ENCODE measurements at regions of chr7 and their contacts with region 1.

Region 1: DNA sequence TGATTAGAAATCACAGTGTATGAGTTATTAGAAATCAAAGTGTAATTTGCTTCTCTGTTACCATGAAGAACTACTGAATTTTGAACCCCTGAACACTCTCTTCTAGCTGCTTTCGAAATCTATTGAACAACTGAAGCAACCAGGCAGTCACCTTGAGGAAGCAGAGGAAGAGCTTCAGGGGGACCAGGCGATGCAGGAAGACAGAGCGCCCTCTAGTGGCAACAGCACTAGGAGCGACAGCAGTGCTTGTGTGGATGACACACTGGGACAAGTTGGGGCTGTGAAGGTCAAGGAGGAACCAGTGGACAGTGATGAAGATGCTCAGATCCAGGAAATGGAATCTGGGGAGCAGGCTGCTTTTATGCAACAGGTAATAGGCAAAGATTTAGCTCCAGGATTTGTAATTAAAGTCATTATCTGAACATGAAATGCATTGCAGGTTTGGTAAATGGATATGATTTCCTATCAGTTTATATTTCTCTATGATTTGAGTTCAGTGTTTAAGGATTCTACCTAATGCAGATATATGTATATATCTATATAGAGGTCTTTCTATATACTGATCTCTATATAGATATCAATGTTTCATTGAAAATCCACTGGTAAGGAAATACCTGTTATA is 170.7 kb downstream of the HDAC9 start:
- DNase-seq: peak; percentile 57 to 73
- H3K4me3 ChIP-seq: no peak overlapping the region
- H3K27ac ChIP-seq: no peak overlapping the region
- H3K4me1 ChIP-seq: no peaks in the 10 kb centered on the region
- H3K27me3 ChIP-seq: no peaks in the 10 kb centered on the region
- CTCF ChIP-seq: peak; percentile 99

Region 2: GRCh38 chr7:18815261-18815960 is 149.2 kb after region 1 on chr7:
- CTCF ChIA-PET with region 1: no interaction called
- POLR2A ChIA-PET with region 1: no interaction called
- intact Hi-C with region 1: no loop called
- DNase-seq: no peak
- H3K4me3 ChIP-seq: no peak overlapping the region
- H3K27ac ChIP-seq: no peak overlapping the region
- H3K4me1 ChIP-seq: no peaks in the 10 kb centered on the region
- H3K27me3 ChIP-seq: no peaks in the 10 kb centered on the region
- CTCF ChIP-seq: no peak

Region 3: GRCh38 chr7:20365486-20365885 is 1699.3 kb after region 1 on chr7:
- CTCF ChIA-PET with region 1: no interaction called
- POLR2A ChIA-PET with region 1: interaction called, 10 read pairs
- intact Hi-C with region 1: no loop called
- DNase-seq: no peak
- H3K4me3 ChIP-seq: no peak overlapping the region
- H3K27ac ChIP-seq: no peak overlapping the region
- H3K4me1 ChIP-seq: no peaks in the 10 kb centered on the region
- H3K27me3 ChIP-seq: no peaks in the 10 kb centered on the region
- CTCF ChIP-seq: no peak